ENCODE measurements at regions of chr1 and their contacts with region 1.

Region 1: DNA sequence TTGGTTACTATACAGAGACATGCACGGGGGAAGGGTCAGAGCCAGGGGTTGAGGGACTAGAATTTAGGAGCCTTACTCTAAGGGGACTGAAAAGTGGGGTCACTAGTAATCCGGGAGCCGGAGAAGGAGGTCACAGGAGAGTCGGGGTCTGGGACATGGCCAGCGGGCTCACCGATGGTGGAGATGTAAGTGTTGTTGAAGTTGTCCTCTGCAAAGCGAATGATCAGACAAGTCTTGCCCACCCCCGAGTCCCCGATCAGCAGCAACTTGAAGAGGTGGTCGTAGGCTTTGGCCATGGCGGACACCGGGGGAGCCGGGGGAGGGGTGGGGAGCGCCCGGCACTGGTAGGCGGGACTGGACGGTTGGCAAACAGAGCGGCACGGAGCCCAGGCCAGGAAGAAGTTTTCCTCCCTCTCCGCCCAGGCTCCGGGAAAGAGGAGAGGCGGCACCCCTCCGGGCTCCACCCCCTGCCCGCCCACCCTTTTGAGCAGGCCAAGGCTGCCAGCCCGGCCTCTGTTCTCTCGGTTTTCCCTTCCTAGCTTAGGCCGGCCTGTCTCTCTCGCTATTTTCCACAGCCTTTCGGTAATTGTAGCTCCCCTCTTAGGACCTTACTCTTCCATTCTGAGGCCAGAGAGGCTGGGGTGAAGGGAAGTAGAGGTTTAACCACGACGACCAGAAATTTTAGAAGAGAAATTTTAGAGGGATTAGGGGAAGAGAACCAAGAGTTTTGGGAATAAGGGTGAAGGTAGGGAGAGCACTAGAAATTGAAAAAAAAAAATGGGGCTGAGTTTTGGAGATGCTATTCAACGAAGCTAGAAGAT is at the start of gene RAB13:
- DNase-seq: peak; percentile 83 to 91
- ATAC-seq: peak; percentile 82
- total RNA-seq, gene RAB13: 61.3 to 65.4 TPM

Region 2: GRCh38 chr1:153670859-153671627 is 315.1 kb before region 1 on chr1 and contains the start of gene ILF2:
- intact Hi-C with region 1: loop called in 1 of 2 experiments (anchors 10 kb)
- DNase-seq: peak; percentile 96 to 99
- ATAC-seq: peak; percentile 91
- total RNA-seq, gene ILF2: 93.1 to 113 TPM

Region 3: DNA sequence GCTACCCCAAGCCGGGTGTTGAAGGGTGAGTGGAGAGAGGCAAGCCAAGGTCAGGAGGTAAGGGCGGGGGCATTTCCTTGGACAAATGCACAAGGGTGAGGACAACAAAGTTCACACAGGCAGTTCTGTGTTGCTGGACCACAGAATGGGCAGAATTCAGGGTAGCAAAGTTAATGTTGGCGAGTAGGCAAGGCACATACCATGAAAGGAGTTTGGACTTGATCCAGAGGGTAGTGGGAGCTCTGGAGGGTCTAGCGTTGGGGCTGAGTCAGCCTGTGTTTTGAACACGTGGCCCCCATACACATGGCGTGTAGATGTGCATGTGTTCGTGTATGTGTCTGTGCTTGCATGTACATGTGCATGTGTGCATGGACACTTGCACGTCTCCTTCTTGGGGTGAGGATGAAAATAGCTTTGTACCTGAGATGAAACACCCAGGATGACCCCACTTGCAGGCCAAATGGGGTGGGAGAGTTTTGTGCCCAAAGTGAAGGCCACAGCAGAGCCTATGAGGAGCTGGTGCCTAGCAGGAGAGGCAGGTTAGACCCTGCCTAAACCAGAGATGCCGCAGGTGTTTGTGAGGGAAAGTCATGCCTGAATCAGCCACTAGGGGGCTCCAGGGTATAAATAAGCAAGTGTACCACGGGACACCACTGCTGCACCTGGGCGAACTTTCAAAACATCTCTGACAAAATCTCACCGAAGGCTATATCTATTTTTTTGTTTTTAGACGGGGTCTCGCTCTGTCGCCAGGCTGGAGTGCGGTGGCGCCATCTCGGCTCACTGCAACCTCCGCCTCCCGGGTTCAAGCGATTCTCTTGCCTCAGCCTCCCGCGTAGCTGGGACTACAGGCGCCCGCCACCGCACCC is 189.1 kb before region 1 on chr1:
- intact Hi-C with region 1: loop called (anchors 10 kb)
- DNase-seq: peak; percentile 74 to 95
- ATAC-seq: peak; percentile 85

Measured in left colon (tissue), 2 donors.